ENCODE measurements at regions of chr15 and their contacts with region 1.

Region 1: GRCh38 chr15:64809649-64810496 is 15.6 kb downstream of the PIF1 start:
- DNase-seq: peak; percentile 95
- ATAC-seq: peak; percentile 4
- H3K4me3 Mint-ChIP-seq: peak overlapping the region; percentile 63
- H3K27ac Mint-ChIP-seq: peak overlapping the region; percentile 97
- H3K4me1 Mint-ChIP-seq: peaks cover 82% of the 10 kb centered on the region
- H3K27me3 Mint-ChIP-seq: no peaks in the 10 kb centered on the region
- CTCF ChIP-seq: peak; percentile 86

Region 2: GRCh38 chr15:64702816-64703646 is 106.8 kb before region 1 on chr15:
- CTCF ChIA-PET with region 1: interaction called, 9 read pairs
- POLR2A ChIA-PET with region 1: interaction called, 33 read pairs
- DNase-seq: peak; percentile 99
- ATAC-seq: peak; percentile 78
- H3K4me3 Mint-ChIP-seq: peak overlapping the region; percentile 82
- H3K27ac Mint-ChIP-seq: peak overlapping the region; percentile 98
- H3K4me1 Mint-ChIP-seq: peaks cover 47% of the 10 kb centered on the region
- H3K27me3 Mint-ChIP-seq: no peaks in the 10 kb centered on the region
- CTCF ChIP-seq: no peak

Region 3: GRCh38 chr15:64740311-64741170 is 69.3 kb before region 1 on chr15:
- CTCF ChIA-PET with region 1: interaction called, 20 read pairs
- POLR2A ChIA-PET with region 1: interaction called, 6 read pairs
- DNase-seq: no peak
- ATAC-seq: no peak
- H3K4me3 Mint-ChIP-seq: no peak overlapping the region
- H3K27ac Mint-ChIP-seq: peak overlapping the region; percentile 73
- H3K4me1 Mint-ChIP-seq: peaks cover 19% of the 10 kb centered on the region
- H3K27me3 Mint-ChIP-seq: no peaks in the 10 kb centered on the region
- CTCF ChIP-seq: no peak

Region 4: GRCh38 chr15:64767203-64767602 is 42.7 kb before region 1 on chr15:
- CTCF ChIA-PET with region 1: interaction called, 50 read pairs
- POLR2A ChIA-PET with region 1: interaction called, 7 read pairs
- DNase-seq: no peak
- ATAC-seq: no peak
- H3K4me3 Mint-ChIP-seq: no peak overlapping the region
- H3K27ac Mint-ChIP-seq: peak overlapping the region; percentile 93
- H3K4me1 Mint-ChIP-seq: peaks cover 66% of the 10 kb centered on the region
- H3K27me3 Mint-ChIP-seq: no peaks in the 10 kb centered on the region
- CTCF ChIP-seq: no peak

Region 5: GRCh38 chr15:64791401-64791800 is 18.5 kb before region 1 on chr15:
- CTCF ChIA-PET with region 1: interaction called, 18 read pairs
- POLR2A ChIA-PET with region 1: interaction called, 8 read pairs
- DNase-seq: no peak
- ATAC-seq: no peak
- H3K4me3 Mint-ChIP-seq: no peak overlapping the region
- H3K27ac Mint-ChIP-seq: peak overlapping the region; percentile 68; the same call in 1 of the 2 replicates
- H3K4me1 Mint-ChIP-seq: peaks cover 7% of the 10 kb centered on the region; the same call in 1 of the 2 replicates
- H3K27me3 Mint-ChIP-seq: no peaks in the 10 kb centered on the region
- CTCF ChIP-seq: no peak

Region 6: DNA sequence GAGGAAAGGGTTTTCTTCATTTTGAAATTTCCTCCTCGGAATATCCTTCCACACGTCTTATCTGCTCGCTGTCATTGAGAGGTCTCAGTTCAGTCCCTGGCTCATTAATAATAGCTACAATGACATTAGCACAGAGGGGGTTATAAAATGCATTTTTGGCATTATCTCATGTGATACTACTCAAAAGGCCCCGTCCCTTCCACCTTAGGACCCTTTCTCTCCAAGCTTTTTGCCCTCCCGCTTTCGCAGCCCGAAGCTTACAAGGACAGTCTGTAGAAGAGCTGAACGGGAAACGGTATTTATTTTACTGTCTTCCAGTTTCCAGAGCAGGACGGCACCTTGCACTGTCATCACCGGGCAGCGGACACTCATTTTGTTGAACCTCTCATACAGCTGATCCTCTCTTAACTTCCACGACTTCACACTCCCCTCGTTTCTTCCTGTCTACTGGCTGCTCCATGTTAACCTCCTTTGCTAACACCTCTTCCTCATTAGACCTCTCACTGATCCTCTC is 26.2 kb after region 1 on chr15:
- CTCF ChIA-PET with region 1: interaction called, 68 read pairs
- POLR2A ChIA-PET with region 1: interaction called, 25 read pairs
- DNase-seq: no peak
- ATAC-seq: peak; percentile 3; the same call in 1 of the 2 replicates
- H3K4me3 Mint-ChIP-seq: peak overlapping the region; percentile 37
- H3K27ac Mint-ChIP-seq: peak overlapping the region; percentile 67
- H3K4me1 Mint-ChIP-seq: peaks cover 40% of the 10 kb centered on the region
- H3K27me3 Mint-ChIP-seq: no peaks in the 10 kb centered on the region
- CTCF ChIP-seq: no peak

Region 7: DNA sequence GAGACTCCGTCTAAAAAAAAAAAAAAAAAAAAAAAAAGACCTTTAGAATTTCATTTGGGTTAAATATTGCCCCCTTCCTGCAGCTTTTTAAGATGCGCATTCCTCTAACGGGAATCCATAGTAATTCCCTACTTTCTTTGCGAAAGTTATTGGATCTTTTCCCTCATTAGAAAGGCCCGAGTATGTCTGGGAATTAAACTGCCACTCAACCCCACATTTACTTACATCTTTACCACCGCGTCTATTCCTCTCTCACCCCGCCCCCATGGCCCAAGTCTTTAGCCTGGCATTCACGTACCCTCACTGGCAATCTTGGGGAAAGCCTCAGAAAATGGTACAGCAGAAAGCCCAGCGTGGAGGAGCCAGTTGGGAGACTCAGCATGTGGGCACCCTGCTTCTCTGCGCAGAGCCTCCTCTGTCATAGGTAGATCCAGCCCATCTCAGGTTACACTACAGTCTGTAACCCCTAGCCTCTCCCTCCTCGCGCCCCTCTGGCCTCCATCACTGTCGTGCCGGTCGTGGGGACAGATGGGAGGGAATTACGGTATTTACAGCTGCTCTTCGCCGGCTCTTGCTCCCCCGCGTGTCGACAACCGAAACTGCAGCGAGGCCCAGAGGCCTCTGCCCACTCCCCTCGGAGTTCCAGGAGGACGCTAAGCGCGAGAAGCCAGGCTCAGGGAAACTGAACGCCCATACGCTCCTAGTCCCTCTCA is 95.4 kb after region 1 on chr15:
- CTCF ChIA-PET with region 1: interaction called, 10 read pairs
- POLR2A ChIA-PET with region 1: interaction called, 3 read pairs
- DNase-seq: peak; percentile 95
- ATAC-seq: peak; percentile 99
- H3K4me3 Mint-ChIP-seq: peak overlapping the region; percentile 71
- H3K27ac Mint-ChIP-seq: peak overlapping the region; percentile 99
- H3K4me1 Mint-ChIP-seq: peaks cover 16% of the 10 kb centered on the region
- H3K27me3 Mint-ChIP-seq: peaks cover 21% of the 10 kb centered on the region
- CTCF ChIP-seq: peak; percentile 64